Left ventricle myocardium superior (tissue), 1 donor: ENCODE measurements at regions of chr3 and their contacts with region 1.

Region 1: GRCh38 chr3:5170975-5171374 is 16.5 kb upstream of the EDEM1 start:
- DNase-seq: no peak
- ATAC-seq: no peak

Region 2: DNA sequence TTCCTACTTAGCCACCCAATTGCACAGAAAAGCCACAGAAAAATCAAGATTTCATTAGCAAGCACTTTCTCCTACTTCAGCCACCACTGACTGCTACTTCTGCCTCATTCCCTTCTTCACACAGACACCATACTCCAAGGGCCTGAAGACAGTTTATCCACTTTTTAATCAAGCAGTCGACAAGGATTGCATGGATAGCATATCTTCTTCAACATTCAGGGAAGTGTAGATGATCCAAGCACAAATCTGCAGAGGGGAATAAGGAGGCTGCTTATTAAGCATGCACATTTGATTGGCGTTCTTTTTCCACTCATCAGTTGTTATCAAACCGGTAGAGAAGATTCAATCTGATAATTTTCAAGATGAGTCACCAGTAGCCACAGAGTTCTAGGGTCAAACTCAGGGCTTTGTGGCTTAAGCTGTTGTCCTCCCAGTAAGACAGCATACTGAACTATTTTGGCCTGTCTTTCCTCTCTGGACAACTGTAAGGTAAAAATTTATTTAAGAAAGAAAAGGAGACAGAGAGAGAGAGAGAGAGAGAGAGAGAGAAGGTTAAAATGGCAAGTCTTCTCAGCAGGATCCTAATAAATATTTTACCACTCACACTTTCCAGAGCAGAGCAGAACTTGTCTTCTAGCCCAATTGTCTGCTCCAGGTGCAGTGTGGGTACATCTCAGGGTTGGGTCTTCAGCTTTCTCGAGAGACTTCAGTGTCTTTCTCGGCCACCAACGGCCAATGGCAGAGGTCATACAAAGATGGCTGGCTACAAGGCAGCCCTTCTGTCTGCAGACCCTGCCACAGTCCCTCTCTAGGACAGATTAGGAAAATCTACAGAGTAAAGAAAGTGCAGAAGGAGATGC is 272.3 kb before region 1 on chr3:
- intact Hi-C with region 1: no loop called
- DNase-seq: no peak
- ATAC-seq: no peak

Region 3: GRCh38 chr3:5122030-5122740 is 48.8 kb before region 1 on chr3 and contains the start of gene ARL8B:
- intact Hi-C with region 1: loop called (anchors 10 kb)
- DNase-seq: peak; percentile 95
- ATAC-seq: peak; percentile 100
- total RNA-seq, gene ARL8B: 62.0 TPM

Region 4: DNA sequence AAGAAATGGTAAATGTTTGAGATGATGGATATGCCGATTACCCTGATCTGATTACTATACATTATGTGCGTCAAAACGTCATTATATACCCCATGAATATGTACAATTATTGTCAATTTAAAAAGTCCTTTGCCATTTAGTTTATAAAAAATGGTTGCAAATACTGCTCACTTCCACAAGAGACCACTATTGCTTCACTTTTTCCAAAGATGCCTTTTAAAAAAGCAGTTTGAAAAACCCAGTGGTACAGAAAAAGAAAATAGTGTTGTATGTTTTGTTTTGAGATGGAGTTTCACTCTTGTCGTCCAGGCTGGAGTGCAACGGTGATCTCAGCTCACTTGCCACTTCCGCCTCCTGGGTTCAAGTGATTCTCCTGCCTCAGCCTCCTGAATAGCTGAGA is 55.8 kb after region 1 on chr3:
- intact Hi-C with region 1: no loop called
- DNase-seq: no peak
- ATAC-seq: no peak